Activated CD4-positive, alpha-beta T cell treated with anti-CD3 and anti-CD28 coated beads for 36 hours (primary cell): ENCODE measurements at regions of chr6 and their contacts with region 1.

Region 1: GRCh38 chr6:117976030-117976651 is 69.1 kb downstream of the SLC35F1 start:
- DNase-seq: no peak
- ATAC-seq: no peak
- H3K4me3 Mint-ChIP-seq: no peak overlapping the region
- H3K27ac Mint-ChIP-seq: no peak overlapping the region
- H3K4me1 Mint-ChIP-seq: no peaks in the 10 kb centered on the region
- H3K27me3 Mint-ChIP-seq: peaks cover 14% of the 10 kb centered on the region

Region 2: GRCh38 chr6:117927866-117928265 is 48.3 kb before region 1 on chr6:
- CTCF ChIA-PET with region 1: no interaction called
- POLR2A ChIA-PET with region 1: no interaction called
- intact Hi-C with region 1: no loop called
- DNase-seq: no peak
- ATAC-seq: no peak
- H3K4me3 Mint-ChIP-seq: no peak overlapping the region
- H3K27ac Mint-ChIP-seq: no peak overlapping the region
- H3K4me1 Mint-ChIP-seq: no peaks in the 10 kb centered on the region
- H3K27me3 Mint-ChIP-seq: peaks cover 6% of the 10 kb centered on the region

Region 3: DNA sequence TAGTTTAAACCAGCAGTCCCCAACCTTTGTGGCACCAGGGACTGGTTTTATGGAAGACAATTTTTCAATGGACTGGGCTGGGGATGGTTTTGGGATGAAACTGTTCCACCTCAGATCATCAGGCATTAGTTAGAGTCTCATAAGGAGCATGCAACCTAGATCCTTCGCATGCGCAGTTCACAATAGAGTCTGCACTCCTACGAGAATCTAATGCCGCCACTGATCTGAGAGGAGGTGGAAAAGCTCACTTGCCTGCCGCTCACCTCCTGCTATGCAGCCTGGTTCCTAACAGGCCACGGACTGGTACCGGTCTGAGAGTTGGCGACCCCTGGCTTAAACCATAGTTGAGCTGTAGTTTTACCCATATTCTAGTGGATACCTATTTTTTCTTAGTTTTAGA is 85.5 kb after region 1 on chr6:
- CTCF ChIA-PET with region 1: no interaction called
- POLR2A ChIA-PET with region 1: no interaction called
- intact Hi-C with region 1: no loop called
- DNase-seq: no peak
- ATAC-seq: no peak
- H3K4me3 Mint-ChIP-seq: no peak overlapping the region
- H3K27ac Mint-ChIP-seq: no peak overlapping the region
- H3K4me1 Mint-ChIP-seq: no peaks in the 10 kb centered on the region
- H3K27me3 Mint-ChIP-seq: peaks cover 12% of the 10 kb centered on the region

Region 4: DNA sequence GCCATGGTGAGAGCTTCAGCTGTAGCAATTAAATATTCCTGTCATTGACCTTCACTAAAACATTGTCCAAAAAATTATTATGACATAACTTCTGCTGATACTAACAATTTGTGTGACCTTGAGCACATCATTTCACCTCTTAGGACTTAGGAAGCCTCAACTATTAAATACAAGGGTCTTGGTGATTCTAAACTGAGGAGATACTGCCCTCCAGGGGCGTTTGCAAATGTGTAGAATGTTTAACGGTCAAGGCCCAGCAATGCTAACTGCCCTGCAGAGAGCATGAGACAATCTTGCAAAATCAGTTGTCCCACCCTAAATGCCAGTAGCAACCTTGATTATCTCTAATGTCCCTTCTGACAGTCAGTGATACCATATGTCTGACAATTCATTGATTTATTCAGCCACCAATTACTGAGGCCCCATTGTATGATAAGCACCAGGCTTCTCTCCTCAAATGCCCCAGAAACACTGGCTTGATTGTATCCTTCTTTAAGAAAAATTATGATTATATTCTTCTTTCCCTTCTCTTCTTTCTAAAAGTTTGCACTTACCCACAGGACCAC is 287.9 kb after region 1 on chr6:
- CTCF ChIA-PET with region 1: interaction called, 7 read pairs
- POLR2A ChIA-PET with region 1: no interaction called
- intact Hi-C with region 1: loop called (anchors 5 kb)
- DNase-seq: peak; percentile 8
- ATAC-seq: no peak
- H3K4me3 Mint-ChIP-seq: no peak overlapping the region
- H3K27ac Mint-ChIP-seq: no peak overlapping the region
- H3K4me1 Mint-ChIP-seq: no peaks in the 10 kb centered on the region
- H3K27me3 Mint-ChIP-seq: no peaks in the 10 kb centered on the region

Region 5: DNA sequence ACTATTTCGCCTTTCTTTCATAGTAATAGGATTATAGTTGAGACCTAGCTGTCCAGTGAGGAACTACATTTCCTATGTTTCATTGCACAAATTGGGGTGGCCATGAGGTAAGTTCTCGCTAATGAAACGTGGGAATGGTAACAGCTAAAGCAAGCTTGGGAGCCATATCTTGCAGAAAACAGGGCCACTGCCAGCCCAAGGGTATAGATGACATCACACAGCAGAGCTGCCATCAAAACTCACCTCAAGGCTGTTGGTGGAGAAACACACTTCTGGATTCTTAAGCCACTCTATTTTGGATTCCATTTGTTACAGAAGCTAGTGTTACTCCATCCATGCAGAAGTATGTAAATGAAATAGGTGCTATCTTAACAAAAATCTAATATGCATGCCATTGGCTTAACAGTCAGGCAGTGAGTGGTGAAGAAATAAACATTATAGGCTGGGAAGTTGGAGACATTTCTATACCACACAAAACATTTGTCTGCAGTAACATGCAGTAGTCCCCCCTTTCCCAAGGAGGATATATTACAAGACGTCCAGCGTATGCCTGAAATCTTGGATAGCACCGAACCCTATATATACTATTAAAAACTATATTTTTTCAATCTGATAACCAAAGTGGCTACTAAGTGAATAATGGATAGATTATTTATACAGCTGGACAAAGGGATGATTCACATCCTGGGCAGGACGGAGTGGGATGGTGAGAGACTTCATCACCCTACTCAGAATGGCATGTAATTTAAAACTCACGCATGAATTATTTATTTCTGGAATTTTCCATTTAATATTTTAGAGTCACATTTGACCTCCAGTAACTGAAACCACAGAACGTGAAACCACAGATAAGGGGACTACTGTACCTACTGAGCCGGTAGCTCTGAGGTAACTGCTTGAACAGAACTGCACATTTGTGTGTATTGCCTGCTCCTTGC is 411.9 kb after region 1 on chr6:
- CTCF ChIA-PET with region 1: no interaction called
- POLR2A ChIA-PET with region 1: no interaction called
- intact Hi-C with region 1: no loop called
- DNase-seq: no peak
- ATAC-seq: no peak
- H3K4me3 Mint-ChIP-seq: no peak overlapping the region
- H3K27ac Mint-ChIP-seq: no peak overlapping the region
- H3K4me1 Mint-ChIP-seq: peaks cover 3% of the 10 kb centered on the region
- H3K27me3 Mint-ChIP-seq: no peaks in the 10 kb centered on the region

Region 6: DNA sequence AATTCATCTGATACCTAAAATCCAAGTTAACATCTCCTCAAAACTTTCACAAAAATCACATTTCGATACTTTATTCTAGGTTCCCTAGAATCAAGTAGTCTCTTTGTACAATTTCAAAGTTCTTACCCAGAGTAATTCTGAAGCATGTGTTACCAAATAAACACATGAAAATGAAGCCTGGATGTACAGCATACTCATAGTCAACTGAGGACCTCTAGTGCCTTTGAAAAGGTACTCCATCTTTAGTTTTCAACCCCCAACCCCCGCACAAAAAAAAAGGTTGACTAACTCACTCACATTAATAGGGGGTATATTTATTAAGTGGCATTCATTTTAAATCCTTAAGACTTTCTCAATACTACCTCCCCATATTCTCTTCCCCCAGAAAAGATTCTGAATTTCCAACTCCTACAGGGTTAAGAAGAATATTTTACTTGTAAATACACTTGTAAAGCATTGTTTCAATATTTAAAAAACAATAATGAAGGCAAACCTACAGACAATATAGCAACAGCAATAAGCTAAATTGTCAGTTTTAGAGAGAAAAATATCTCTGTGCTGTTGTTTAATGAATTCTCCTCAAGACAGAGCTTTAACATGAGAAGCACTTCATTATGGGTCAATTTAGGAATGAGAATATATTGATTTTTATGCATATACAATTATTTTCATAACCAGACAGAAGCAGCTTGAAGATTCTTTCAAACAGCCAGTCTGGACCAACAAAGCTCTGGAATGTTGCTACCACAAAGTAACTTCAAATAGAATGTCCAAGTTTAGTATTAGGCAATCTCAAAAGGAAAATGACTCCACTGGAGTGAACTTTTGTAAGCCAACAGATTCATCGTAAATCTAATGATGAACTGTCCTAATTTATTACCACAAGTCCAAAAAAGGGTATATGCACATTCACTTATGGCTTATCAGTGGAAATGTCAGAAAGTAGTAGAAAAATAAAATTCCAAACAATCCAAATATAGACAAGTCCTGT is 575.2 kb after region 1 on chr6:
- CTCF ChIA-PET with region 1: interaction called, 5 read pairs
- POLR2A ChIA-PET with region 1: no interaction called
- intact Hi-C with region 1: loop called (anchors 1 to 10 kb)
- DNase-seq: no peak
- ATAC-seq: peak; percentile 79
- H3K4me3 Mint-ChIP-seq: no peak overlapping the region
- H3K27ac Mint-ChIP-seq: peak overlapping the region; percentile 45
- H3K4me1 Mint-ChIP-seq: peaks cover 24% of the 10 kb centered on the region
- H3K27me3 Mint-ChIP-seq: no peaks in the 10 kb centered on the region

Region 7: DNA sequence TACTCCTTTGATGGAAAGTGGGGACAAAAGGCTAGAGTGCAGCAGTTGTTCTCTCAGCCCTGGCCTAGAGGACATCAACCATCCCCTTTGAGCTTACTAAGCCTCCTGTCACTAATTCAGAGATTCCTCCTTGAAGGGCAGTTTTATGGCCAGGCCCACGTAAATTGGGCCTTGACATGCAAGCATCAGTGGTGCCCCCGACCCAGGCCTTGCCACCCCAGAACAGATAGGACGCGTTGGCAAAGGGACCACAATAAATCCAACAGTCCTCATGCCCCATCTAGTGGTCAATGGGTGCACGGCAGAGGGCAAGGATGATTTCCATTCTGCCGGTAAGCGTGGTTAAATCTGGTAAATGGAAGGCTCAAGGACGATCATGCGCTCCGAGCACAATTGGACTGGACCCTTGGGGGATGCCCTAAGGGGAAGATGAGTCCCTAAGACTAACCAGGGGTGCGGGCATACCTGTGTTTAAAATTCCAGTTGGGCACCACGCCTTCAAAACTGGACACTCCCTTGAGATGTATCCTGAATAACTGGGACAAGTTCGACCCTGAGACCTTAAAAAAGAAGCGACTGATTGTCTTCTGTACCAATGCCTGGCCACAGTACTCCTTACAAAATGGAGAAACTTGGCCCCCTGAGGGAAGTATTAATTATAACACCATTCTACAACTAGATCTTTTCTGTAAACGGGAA is 642.7 kb after region 1 on chr6:
- CTCF ChIA-PET with region 1: no interaction called
- POLR2A ChIA-PET with region 1: no interaction called
- intact Hi-C with region 1: loop called in 1 of 2 experiments (anchors 5 kb)
- DNase-seq: peak; percentile 78
- ATAC-seq: peak; percentile 94
- H3K4me3 Mint-ChIP-seq: no peak overlapping the region
- H3K27ac Mint-ChIP-seq: no peak overlapping the region
- H3K4me1 Mint-ChIP-seq: peaks cover 39% of the 10 kb centered on the region
- H3K27me3 Mint-ChIP-seq: no peaks in the 10 kb centered on the region

Region 8: DNA sequence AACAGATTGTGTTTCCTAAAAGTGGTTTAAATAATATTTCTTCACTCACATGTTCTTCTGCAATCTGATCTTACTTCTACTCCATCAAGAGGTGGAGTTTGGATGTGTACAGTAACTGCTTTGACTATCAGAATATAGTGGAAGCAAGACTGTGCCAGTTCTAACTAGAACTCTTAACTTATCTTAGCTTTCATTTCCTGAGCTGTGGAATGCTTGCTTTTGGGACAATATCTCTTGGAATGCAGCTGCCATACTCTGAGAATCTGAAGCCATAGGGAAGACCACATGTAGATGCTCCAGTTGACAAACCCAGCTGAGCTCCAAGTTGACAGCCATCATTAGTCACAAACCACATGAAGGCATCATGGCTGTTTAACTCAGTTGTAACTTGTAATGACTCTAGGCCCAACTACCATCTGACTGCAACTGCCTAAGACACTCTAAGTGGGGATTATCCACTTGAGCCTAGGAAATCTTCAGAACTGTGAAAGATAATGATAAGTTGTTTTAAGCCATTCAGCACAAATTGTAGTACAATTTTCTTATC is 1414.2 kb after region 1 on chr6:
- CTCF ChIA-PET with region 1: no interaction called
- POLR2A ChIA-PET with region 1: no interaction called
- intact Hi-C with region 1: no loop called
- DNase-seq: no peak
- ATAC-seq: peak; percentile 42
- H3K4me3 Mint-ChIP-seq: no peak overlapping the region
- H3K27ac Mint-ChIP-seq: no peak overlapping the region
- H3K4me1 Mint-ChIP-seq: no peaks in the 10 kb centered on the region
- H3K27me3 Mint-ChIP-seq: no peaks in the 10 kb centered on the region